CD4-positive, alpha-beta T cell (primary cell): ENCODE measurements at regions of chr3 and their contacts with region 1.

Region 1: DNA sequence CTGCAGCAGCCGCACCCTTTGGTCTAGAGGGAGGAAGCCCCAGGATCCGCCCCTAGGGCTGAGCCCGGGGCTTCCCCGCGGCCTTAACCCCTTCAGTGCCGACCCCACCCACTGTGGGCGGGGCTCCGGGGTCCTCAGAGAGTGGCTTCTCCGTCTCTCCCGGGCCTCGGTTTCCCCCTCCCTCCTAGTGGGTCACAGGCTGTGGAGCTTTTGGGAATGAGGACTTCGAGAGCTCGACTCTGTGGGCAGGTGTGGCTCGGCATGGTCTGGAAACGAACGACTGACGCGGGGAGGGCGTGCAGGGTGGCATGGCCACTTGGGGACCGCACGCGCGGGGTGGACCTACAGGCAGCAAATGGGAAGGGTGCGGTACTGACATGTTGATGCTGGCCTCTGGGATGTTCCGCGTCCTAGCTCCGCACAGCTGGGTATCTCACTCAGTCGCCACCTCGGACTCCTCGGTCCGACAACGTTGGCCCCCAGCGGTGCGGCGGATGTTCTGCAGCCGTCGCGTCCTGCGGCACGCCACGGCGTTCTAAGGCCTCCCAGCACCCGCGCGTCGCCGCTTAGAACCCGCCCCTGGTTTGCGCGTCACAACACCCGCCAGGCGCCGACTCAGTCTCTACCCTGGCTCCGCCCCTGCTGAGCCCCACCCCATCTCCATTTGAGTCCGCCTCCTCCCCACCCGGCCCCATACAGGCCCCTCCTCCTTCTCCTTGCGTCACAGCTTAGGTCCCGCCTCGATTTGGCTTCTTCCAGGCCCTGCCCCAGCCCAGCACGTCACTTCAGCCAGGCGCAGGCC is at the starts of genes HYAL3 and NAA80:
- DNase-seq: peak; percentile 98 to 100 (median 99)
- ATAC-seq: peak; percentile 83
- H3K4me3 ChIP-seq: peak within 1 kb of the TSS; percentile 82
- H3K4me3 Mint-ChIP-seq: peak within 1 kb of the TSS; percentile 99
- H3K27ac ChIP-seq: peak within 1 kb of the TSS; percentile 89 to 94
- H3K27ac Mint-ChIP-seq: peak within 1 kb of the TSS; percentile 99
- H3K4me1 ChIP-seq: peaks cover 31% of the 10 kb centered on the region
- H3K4me1 Mint-ChIP-seq: peaks cover 30% of the 10 kb centered on the region
- H3K27me3 ChIP-seq: no peaks in the 10 kb centered on the region
- H3K27me3 Mint-ChIP-seq: no peaks in the 10 kb centered on the region
- CTCF ChIP-seq: peak; percentile 56
- total RNA-seq, gene HYAL3: 3.0 to 3.2 TPM
- total RNA-seq, gene NAA80: 47.0 to 48.8 TPM

Region 2: DNA sequence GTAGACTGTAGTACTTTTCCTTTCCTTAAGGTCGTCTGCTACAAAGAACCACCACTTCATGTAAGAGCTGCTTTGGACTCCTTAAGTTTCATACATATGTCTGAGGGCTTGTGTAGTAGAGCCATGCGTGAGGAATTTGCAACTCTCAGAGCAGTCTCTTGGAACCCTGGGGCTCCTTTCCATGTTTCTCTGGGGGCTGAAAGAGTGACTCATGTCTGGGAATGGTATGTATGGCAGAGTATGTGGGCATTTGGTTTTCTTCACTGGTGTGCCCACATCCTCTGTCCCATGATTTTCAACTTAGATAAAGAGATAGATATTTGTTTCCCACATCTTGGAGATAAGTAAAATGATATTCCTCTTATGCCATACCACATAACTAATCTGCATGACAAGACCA is 230.9 kb before region 1 on chr3:
- CTCF ChIA-PET with region 1: no interaction called
- POLR2A ChIA-PET with region 1: no interaction called
- intact Hi-C with region 1: no loop called
- DNase-seq: no peak
- ATAC-seq: no peak
- H3K4me3 ChIP-seq: no peak overlapping the region
- H3K4me3 Mint-ChIP-seq: no peak overlapping the region
- H3K27ac ChIP-seq: no peak overlapping the region
- H3K27ac Mint-ChIP-seq: no peak overlapping the region
- H3K4me1 ChIP-seq: no peaks in the 10 kb centered on the region
- H3K4me1 Mint-ChIP-seq: no peaks in the 10 kb centered on the region
- H3K27me3 ChIP-seq: no peaks in the 10 kb centered on the region
- H3K27me3 Mint-ChIP-seq: no peaks in the 10 kb centered on the region
- CTCF ChIP-seq: no peak

Region 3: GRCh38 chr3:50192689-50193141 is 106.3 kb before region 1 on chr3:
- CTCF ChIA-PET with region 1: interaction called, 10 read pairs
- POLR2A ChIA-PET with region 1: interaction called, 5 read pairs
- intact Hi-C with region 1: no loop called
- DNase-seq: peak; percentile 69 to 91 (median 82)
- ATAC-seq: peak; percentile 25
- H3K4me3 ChIP-seq: no peak overlapping the region
- H3K4me3 Mint-ChIP-seq: peak overlapping the region; percentile 34
- H3K27ac ChIP-seq: no peak overlapping the region
- H3K27ac Mint-ChIP-seq: no peak overlapping the region
- H3K4me1 ChIP-seq: peaks cover 27% of the 10 kb centered on the region
- H3K4me1 Mint-ChIP-seq: peaks cover 15% of the 10 kb centered on the region
- H3K27me3 ChIP-seq: peaks cover 13 to 17% of the 10 kb centered on the region in 2 experiments
- H3K27me3 Mint-ChIP-seq: peaks cover 26% of the 10 kb centered on the region
- CTCF ChIP-seq: peak; percentile 88

Region 4: DNA sequence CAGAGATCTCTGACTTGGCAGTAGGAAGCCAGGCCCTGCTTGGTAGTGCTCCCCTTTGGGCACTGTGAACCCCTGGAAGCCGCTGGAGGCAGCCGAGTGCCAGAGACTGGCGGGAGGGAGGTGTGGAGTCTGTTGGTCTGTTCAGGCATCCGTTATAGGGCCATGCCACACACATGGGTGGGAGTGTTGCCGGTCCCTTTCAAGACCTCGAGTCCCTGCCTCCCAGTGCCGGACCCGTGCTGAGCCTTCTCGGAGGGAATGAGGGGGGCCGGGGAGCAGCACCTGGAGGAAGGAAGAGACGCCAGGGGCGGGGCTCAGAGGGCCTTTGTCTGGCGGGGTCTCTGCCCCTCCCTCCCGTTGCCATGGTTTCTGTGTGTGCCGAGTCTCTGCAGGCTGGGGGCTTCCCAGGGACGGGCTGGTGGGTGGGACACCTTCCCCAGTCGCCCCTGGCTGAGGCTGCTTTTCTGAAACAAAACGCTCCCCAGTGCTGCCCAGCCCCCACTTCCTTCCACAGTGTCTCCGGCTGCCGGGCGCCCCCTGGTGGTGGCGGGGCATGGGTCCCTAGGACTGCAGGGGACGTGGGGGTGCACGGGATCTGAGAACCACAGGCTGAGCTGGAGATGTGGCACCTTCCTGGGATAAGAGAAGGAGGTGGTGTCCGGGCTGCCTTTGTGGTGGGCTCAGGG is 53.1 kb before region 1 on chr3:
- CTCF ChIA-PET with region 1: interaction called, 4 read pairs
- POLR2A ChIA-PET with region 1: interaction called, 10 read pairs
- intact Hi-C with region 1: no loop called
- DNase-seq: peak; percentile 92 to 98 (median 94)
- ATAC-seq: peak; percentile 80
- H3K4me3 ChIP-seq: peak overlapping the region; percentile 47
- H3K4me3 Mint-ChIP-seq: peak overlapping the region; percentile 83
- H3K27ac ChIP-seq: peak overlapping the region; percentile 89 to 90
- H3K27ac Mint-ChIP-seq: peak overlapping the region; percentile 92
- H3K4me1 ChIP-seq: peaks cover 100% of the 10 kb centered on the region
- H3K4me1 Mint-ChIP-seq: peaks cover 79% of the 10 kb centered on the region
- H3K27me3 ChIP-seq: no peaks in the 10 kb centered on the region
- H3K27me3 Mint-ChIP-seq: no peaks in the 10 kb centered on the region
- CTCF ChIP-seq: peak; percentile 98

Region 5: DNA sequence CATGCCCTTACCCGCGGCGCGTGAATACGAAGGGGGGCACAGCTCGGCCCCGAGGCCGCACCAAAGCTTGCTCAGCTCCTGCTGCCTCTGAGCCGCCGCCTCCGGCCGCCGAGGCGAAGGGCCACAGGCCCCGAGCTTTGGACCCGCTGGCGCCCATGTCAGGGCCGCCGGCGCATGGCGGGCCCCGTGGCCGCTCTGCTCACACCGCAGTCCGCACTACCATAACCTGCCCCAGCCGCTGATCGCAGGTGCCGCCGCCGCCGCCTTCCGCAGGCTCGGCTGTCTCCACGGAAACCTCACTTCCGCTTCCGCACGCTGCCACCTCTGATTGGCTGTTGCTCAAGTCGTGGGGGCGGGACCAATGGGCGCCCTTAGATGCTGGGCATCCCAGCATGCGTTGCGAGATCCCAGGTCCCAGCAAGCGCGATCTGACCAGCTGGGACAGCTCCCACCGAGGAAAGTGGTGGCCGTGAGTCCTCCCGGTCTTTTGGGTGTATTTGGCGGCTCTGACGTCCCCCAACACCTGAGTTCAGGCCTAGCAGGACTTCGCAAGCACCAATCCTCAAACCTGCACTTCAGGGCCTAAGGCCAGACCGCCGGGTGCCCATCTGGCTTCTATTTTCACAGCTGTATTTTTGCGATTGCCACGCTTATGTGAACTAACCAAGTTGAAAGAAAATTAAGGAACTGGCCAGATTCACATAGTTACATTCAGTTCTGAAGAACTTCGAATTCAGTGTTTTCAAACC is 29.1 kb after region 1 on chr3 and contains the start of gene TUSC2:
- CTCF ChIA-PET with region 1: interaction called, 18 read pairs
- POLR2A ChIA-PET with region 1: interaction called, 17 read pairs
- intact Hi-C with region 1: no loop called
- DNase-seq: peak; percentile 91 to 98 (median 94)
- ATAC-seq: peak; percentile 95
- H3K4me3 ChIP-seq: peak within 1 kb of the TSS; percentile 90
- H3K4me3 Mint-ChIP-seq: peak within 1 kb of the TSS; percentile 97
- H3K27ac ChIP-seq: peak within 1 kb of the TSS; percentile 47 to 81
- H3K27ac Mint-ChIP-seq: peak within 1 kb of the TSS; percentile 92
- H3K4me1 ChIP-seq: peaks cover 41% of the 10 kb centered on the region
- H3K4me1 Mint-ChIP-seq: peaks cover 30% of the 10 kb centered on the region
- H3K27me3 ChIP-seq: no peaks in the 10 kb centered on the region
- H3K27me3 Mint-ChIP-seq: no peaks in the 10 kb centered on the region
- CTCF ChIP-seq: no peak
- total RNA-seq, gene TUSC2: 23.1 to 24.7 TPM

Region 6: DNA sequence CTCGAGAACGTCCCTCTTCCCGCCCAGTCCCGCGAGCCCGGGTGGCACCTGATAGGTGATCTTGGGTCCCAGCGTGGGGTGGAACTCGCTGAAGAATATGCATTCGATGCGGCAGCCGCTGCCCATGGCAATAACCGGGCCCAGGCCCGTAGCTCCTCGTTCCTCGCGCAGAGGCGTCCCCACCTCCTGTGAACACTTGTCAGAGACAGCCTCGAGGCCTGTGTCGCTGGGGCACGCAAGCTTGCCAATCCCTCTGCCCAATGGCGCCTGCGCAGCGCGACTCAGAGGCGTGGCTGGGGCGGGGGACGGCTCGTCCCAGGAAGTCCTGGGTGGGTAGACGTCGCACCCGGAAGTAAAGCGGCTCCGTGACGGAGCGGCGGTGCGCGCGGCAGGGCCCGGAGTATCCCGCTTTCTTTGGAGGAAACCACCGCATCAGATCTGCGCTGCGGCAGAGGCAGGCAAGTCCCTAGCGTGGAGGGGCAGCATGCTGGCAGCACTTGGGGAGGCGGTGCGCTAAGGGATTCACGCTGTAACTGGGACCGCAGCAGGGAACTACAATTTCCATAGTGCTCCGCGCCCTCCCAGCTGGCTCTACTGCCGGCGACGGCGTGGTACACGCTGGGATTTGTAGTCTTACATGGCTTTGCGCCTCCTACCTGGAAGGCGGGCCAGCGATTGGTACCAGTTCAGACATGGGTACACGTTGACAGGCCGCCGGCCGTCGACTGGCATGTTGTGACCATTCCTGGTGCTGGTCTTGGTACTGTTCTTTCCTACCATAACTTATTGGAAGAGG is 51.7 kb after region 1 on chr3 and contains the starts of genes CYB561D2 and NPRL2:
- CTCF ChIA-PET with region 1: interaction called, 8 read pairs
- POLR2A ChIA-PET with region 1: interaction called, 42 read pairs
- intact Hi-C with region 1: no loop called
- DNase-seq: peak; percentile 98 to 100 (median 99)
- ATAC-seq: peak; percentile 85
- H3K4me3 ChIP-seq: peak within 1 kb of the TSS; percentile 76
- H3K4me3 Mint-ChIP-seq: peak within 1 kb of the TSS; percentile 97
- H3K27ac ChIP-seq: peak within 1 kb of the TSS; percentile 94 to 97
- H3K27ac Mint-ChIP-seq: peak within 1 kb of the TSS; percentile 99
- H3K4me1 ChIP-seq: peaks cover 73% of the 10 kb centered on the region
- H3K4me1 Mint-ChIP-seq: peaks cover 64% of the 10 kb centered on the region
- H3K27me3 ChIP-seq: no peaks in the 10 kb centered on the region
- H3K27me3 Mint-ChIP-seq: no peaks in the 10 kb centered on the region
- CTCF ChIP-seq: no peak
- total RNA-seq, gene CYB561D2: 19.8 TPM
- total RNA-seq, gene NPRL2: 29.4 to 33.2 TPM

Region 7: GRCh38 chr3:50365080-50365841 is 66.2 kb after region 1 on chr3:
- CTCF ChIA-PET with region 1: interaction called, 3 read pairs
- POLR2A ChIA-PET with region 1: interaction called, 9 read pairs
- intact Hi-C with region 1: loop called in 1 of 2 experiments (anchors 1 kb)
- DNase-seq: peak; percentile 92 to 97 (median 95)
- ATAC-seq: peak; percentile 95
- H3K4me3 ChIP-seq: peak overlapping the region; percentile 73
- H3K4me3 Mint-ChIP-seq: peak overlapping the region; percentile 94
- H3K27ac ChIP-seq: peak overlapping the region; percentile 69 to 81
- H3K27ac Mint-ChIP-seq: peak overlapping the region; percentile 98
- H3K4me1 ChIP-seq: peaks cover 30% of the 10 kb centered on the region
- H3K4me1 Mint-ChIP-seq: peaks cover 25% of the 10 kb centered on the region
- H3K27me3 ChIP-seq: no peaks in the 10 kb centered on the region
- H3K27me3 Mint-ChIP-seq: no peaks in the 10 kb centered on the region
- CTCF ChIP-seq: no peak